ENCODE measurements at regions of chr2 and their contacts with region 1.

Region 1: DNA sequence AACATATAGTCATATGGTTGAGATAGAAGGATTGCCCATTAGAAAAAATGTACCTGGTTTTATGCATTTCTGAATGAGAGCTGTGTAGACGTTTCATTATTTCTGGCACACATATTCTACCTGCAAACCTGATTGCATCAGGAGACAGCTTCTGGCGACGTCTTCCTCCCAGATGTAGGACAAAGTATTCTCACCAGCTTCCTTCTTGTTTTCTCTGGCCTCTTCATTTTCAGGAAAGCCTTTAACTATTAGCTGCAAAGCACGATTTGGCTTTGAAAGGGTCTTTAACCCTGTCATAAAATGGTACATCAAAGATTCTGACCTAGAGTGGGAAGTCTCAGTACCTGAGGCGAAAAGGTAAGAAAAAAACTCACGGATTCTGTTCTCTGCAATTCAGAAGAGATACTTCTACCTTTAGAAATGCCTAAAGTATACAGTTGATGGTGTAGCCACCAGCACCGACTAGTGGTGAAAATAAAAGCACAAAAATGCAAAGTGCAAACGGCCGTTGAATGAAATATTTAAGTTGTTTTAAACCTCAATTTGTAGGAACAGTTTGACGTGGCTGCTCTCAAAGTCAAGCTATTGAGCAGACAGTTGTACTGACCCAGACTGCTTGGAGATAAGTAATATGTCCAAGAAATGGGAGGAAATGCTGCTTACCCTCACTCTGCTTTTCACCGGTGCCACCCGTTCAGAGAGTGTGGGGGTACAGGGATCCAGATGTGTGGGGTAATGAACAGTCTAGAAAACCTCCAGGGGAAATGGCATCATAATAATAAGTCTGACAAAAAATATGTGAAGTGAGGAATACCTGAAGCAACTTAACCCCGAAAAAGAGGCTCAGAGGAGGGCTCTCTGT is 20.2 kb downstream of the IL18RAP start:
- DNase-seq: peak; percentile 8 to 76 (median 44)
- ATAC-seq: peak; percentile 73
- H3K4me3 ChIP-seq: no peak overlapping the region
- H3K4me3 Mint-ChIP-seq: no peak overlapping the region
- H3K27ac ChIP-seq: no peak overlapping the region
- H3K27ac Mint-ChIP-seq: peak overlapping the region; percentile 64
- H3K4me1 ChIP-seq: peaks cover 4% of the 10 kb centered on the region
- H3K4me1 Mint-ChIP-seq: peaks cover 9% of the 10 kb centered on the region
- H3K27me3 ChIP-seq: no peaks in the 10 kb centered on the region
- H3K27me3 Mint-ChIP-seq: no peaks in the 10 kb centered on the region
- CTCF ChIP-seq: peak; percentile 94

Region 2: GRCh38 chr2:102005989-102006885 is 437.0 kb before region 1 on chr2:
- CTCF ChIA-PET with region 1: interaction called, 17 read pairs
- POLR2A ChIA-PET with region 1: no interaction called
- intact Hi-C with region 1: no loop called
- DNase-seq: peak in 3 of 9 experiments; percentile 20 to 67 (median 51)
- ATAC-seq: peak; percentile 51
- H3K4me3 ChIP-seq: no peak overlapping the region
- H3K4me3 Mint-ChIP-seq: no peak overlapping the region
- H3K27ac ChIP-seq: no peak overlapping the region
- H3K27ac Mint-ChIP-seq: no peak overlapping the region
- H3K4me1 ChIP-seq: peaks cover 14% of the 10 kb centered on the region
- H3K4me1 Mint-ChIP-seq: no peaks in the 10 kb centered on the region
- H3K27me3 ChIP-seq: peaks cover 0 to 3% of the 10 kb centered on the region in 2 experiments
- H3K27me3 Mint-ChIP-seq: no peaks in the 10 kb centered on the region
- CTCF ChIP-seq: peak; percentile 41

Region 3: DNA sequence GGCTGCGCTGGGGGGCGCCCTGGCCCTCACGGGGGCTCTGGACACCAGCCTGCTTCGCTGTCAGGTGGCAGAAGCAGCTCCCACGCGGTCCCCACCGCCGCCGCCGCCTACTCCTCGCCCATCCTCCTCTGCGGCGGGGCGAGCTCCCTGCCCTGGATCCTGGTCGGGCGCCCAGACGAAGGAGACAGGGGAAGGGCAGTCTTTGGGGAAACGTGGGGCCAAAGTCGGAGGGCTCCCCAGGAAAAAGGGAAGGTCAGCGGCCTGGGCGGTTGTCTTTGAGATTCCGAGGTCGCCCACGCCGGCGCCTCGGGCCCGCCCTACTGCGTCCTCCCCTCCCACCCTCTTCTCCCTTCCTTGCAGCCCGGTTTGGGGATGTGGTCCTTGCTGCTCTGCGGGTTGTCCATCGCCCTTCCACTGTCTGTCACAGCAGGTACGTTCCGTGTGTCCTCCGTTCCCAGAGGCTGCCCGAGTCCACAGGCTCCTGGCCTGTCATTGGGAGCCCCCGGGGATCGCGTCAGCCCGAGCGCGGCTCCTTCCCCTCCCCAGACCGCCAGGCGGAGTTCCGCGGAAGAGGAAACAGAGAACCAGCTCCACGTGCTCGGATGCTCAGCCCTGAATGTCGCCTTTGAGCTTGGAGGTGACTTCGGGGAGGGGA is 255.6 kb before region 1 on chr2:
- CTCF ChIA-PET with region 1: interaction called, 3 read pairs
- POLR2A ChIA-PET with region 1: no interaction called
- intact Hi-C with region 1: loop called (anchors 5 kb)
- DNase-seq: peak in 8 of 9 experiments; percentile 9 to 59 (median 37)
- ATAC-seq: peak; percentile 75
- H3K4me3 ChIP-seq: peak overlapping the region; percentile 20 to 39
- H3K4me3 Mint-ChIP-seq: peak overlapping the region; percentile 87
- H3K27ac ChIP-seq: no peak overlapping the region
- H3K27ac Mint-ChIP-seq: no peak overlapping the region
- H3K4me1 ChIP-seq: no peaks in the 10 kb centered on the region
- H3K4me1 Mint-ChIP-seq: peaks cover 7% of the 10 kb centered on the region
- H3K27me3 ChIP-seq: no peaks in the 10 kb centered on the region
- H3K27me3 Mint-ChIP-seq: peaks cover 21% of the 10 kb centered on the region
- CTCF ChIP-seq: no peak

Region 4: GRCh38 chr2:102258386-102259074 is 184.7 kb before region 1 on chr2:
- CTCF ChIA-PET with region 1: interaction called, 41 read pairs
- POLR2A ChIA-PET with region 1: no interaction called
- intact Hi-C with region 1: no loop called
- DNase-seq: peak in 2 of 9 experiments; percentile 24 to 55
- ATAC-seq: peak; percentile 58
- H3K4me3 ChIP-seq: no peak overlapping the region
- H3K4me3 Mint-ChIP-seq: no peak overlapping the region
- H3K27ac ChIP-seq: peak overlapping the region in 1 of 2 experiments; percentile 20
- H3K27ac Mint-ChIP-seq: peak overlapping the region; percentile 78
- H3K4me1 ChIP-seq: peaks cover 3% of the 10 kb centered on the region
- H3K4me1 Mint-ChIP-seq: peaks cover 39% of the 10 kb centered on the region
- H3K27me3 ChIP-seq: no peaks in the 10 kb centered on the region
- H3K27me3 Mint-ChIP-seq: no peaks in the 10 kb centered on the region
- CTCF ChIP-seq: no peak

Region 5: DNA sequence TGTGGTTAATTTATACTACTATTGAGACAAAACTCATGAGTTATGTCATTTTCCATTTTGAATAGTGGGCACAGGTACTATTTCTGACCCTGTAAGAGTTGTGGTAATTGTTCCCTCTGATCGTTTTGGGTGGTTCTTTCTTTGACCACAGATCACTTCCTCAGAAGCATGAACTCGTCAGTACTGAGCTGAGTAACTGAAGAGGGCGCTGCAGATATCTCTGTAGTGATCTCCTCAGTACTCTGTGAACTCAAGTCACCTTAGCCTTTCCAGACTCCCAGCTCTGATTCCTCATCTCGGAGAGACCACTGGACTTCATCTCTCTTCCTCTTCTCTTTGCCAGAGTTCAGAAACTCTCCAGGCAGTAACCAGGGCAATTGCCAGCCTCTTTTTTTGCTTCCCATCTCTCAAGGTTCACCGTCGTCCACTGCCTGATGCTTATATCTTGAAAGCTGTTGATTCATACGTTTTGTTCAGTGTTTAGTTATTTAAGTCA is 141.3 kb before region 1 on chr2:
- CTCF ChIA-PET with region 1: interaction called, 27 read pairs
- POLR2A ChIA-PET with region 1: no interaction called
- intact Hi-C with region 1: loop called (anchors 1 kb)
- DNase-seq: peak; percentile 5 to 79 (median 41)
- ATAC-seq: peak; percentile 85
- H3K4me3 ChIP-seq: no peak overlapping the region
- H3K4me3 Mint-ChIP-seq: peak overlapping the region; percentile 38
- H3K27ac ChIP-seq: no peak overlapping the region
- H3K27ac Mint-ChIP-seq: no peak overlapping the region
- H3K4me1 ChIP-seq: peaks cover 6% of the 10 kb centered on the region
- H3K4me1 Mint-ChIP-seq: peaks cover 12% of the 10 kb centered on the region
- H3K27me3 ChIP-seq: no peaks in the 10 kb centered on the region
- H3K27me3 Mint-ChIP-seq: no peaks in the 10 kb centered on the region
- CTCF ChIP-seq: peak; percentile 50

Region 6: DNA sequence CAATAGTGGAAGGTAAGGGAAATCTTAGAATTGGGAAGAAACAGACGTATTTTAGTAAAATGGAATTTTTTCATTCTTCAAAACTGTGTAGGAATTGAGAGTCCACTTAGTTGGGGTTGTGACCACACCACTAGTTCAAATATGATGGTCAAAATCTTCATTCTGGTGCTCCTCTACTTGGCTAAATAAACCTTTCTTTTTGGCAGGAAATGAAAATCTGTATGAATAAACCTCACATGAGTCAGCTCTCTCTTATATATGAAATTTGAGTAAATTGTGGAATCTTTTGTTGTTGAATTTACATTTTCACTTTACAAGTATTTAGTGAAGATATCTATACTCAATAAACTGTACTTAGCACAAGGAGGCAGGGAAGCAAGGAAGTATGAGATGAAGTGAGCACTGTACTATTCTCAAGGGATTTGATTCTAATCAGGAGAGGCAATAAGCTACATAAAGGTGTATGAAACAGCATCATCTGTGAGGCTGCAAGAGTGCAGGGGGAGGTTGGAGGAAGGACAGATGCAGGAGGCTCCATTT is 67.1 kb before region 1 on chr2:
- CTCF ChIA-PET with region 1: interaction called, 10 read pairs
- POLR2A ChIA-PET with region 1: no interaction called
- intact Hi-C with region 1: no loop called
- DNase-seq: no peak
- ATAC-seq: no peak
- H3K4me3 ChIP-seq: no peak overlapping the region
- H3K4me3 Mint-ChIP-seq: no peak overlapping the region
- H3K27ac ChIP-seq: no peak overlapping the region
- H3K27ac Mint-ChIP-seq: no peak overlapping the region
- H3K4me1 ChIP-seq: no peaks in the 10 kb centered on the region
- H3K4me1 Mint-ChIP-seq: no peaks in the 10 kb centered on the region
- H3K27me3 ChIP-seq: no peaks in the 10 kb centered on the region
- H3K27me3 Mint-ChIP-seq: no peaks in the 10 kb centered on the region
- CTCF ChIP-seq: no peak

Region 7: GRCh38 chr2:102424754-102425153 is 18.4 kb before region 1 on chr2:
- CTCF ChIA-PET with region 1: interaction called, 43 read pairs
- POLR2A ChIA-PET with region 1: no interaction called
- intact Hi-C with region 1: no loop called
- DNase-seq: no peak
- ATAC-seq: no peak
- H3K4me3 ChIP-seq: no peak overlapping the region
- H3K4me3 Mint-ChIP-seq: peak overlapping the region; percentile 15
- H3K27ac ChIP-seq: peak overlapping the region in 1 of 2 experiments; percentile 12
- H3K27ac Mint-ChIP-seq: peak overlapping the region; percentile 20
- H3K4me1 ChIP-seq: no peaks in the 10 kb centered on the region
- H3K4me1 Mint-ChIP-seq: peaks cover 51% of the 10 kb centered on the region
- H3K27me3 ChIP-seq: no peaks in the 10 kb centered on the region
- H3K27me3 Mint-ChIP-seq: no peaks in the 10 kb centered on the region
- CTCF ChIP-seq: no peak